H1 (cell line): ENCODE measurements at regions of chr1 and their contacts with region 1.

Region 1: GRCh38 chr1:44049839-44050238 is 18.6 kb upstream of the SLC6A9 start:
- DNase-seq: no peak
- H3K4me3 ChIP-seq: no peak overlapping the region
- H3K27ac ChIP-seq: no peak overlapping the region
- H3K4me1 ChIP-seq: peaks cover 0 to 3% (median under 1%) of the 10 kb centered on the region in 4 experiments; a peak in 1 of 7 replicates
- H3K27me3 ChIP-seq: peaks cover 0 to 5% (median 0%) of the 10 kb centered on the region in 4 experiments; a peak in 3 of 7 replicates
- CTCF ChIP-seq: no peak
- EP300 ChIP-seq: no peak
- POLR2A ChIP-seq: no peak
- RAD21 ChIP-seq: no peak

Region 2: GRCh38 chr1:43602990-43603389 is 446.8 kb before region 1 on chr1:
- CTCF ChIA-PET with region 1: no interaction called
- POLR2A ChIA-PET with region 1: no interaction called
- DNase-seq: no peak
- H3K4me3 ChIP-seq: no peak overlapping the region
- H3K27ac ChIP-seq: no peak overlapping the region
- H3K4me1 ChIP-seq: no peaks in the 10 kb centered on the region; a peak in 1 of 7 replicates
- H3K27me3 ChIP-seq: no peaks in the 10 kb centered on the region
- CTCF ChIP-seq: no peak
- EP300 ChIP-seq: no peak
- POLR2A ChIP-seq: no peak
- RAD21 ChIP-seq: no peak; a peak in 1 of 4 replicates

Region 3: GRCh38 chr1:43814401-43814800 is 235.4 kb before region 1 on chr1:
- CTCF ChIA-PET with region 1: no interaction called
- POLR2A ChIA-PET with region 1: no interaction called
- DNase-seq: no peak
- H3K4me3 ChIP-seq: no peak overlapping the region
- H3K27ac ChIP-seq: no peak overlapping the region
- H3K4me1 ChIP-seq: peaks cover 0 to 3% (median 0%) of the 10 kb centered on the region in 4 experiments; a peak in 2 of 7 replicates
- H3K27me3 ChIP-seq: no peaks in the 10 kb centered on the region
- CTCF ChIP-seq: no peak
- EP300 ChIP-seq: no peak
- POLR2A ChIP-seq: no peak
- RAD21 ChIP-seq: no peak

Region 4: GRCh38 chr1:43881415-43881814 is 168.4 kb before region 1 on chr1:
- CTCF ChIA-PET with region 1: no interaction called
- POLR2A ChIA-PET with region 1: no interaction called
- DNase-seq: no peak
- H3K4me3 ChIP-seq: no peak overlapping the region
- H3K27ac ChIP-seq: no peak overlapping the region
- H3K4me1 ChIP-seq: peaks cover 7 to 17% (median 12%) of the 10 kb centered on the region in 4 experiments
- H3K27me3 ChIP-seq: no peaks in the 10 kb centered on the region; a peak in 1 of 7 replicates
- CTCF ChIP-seq: peak; percentile 2 to 40 (median 2); a peak in 2 of 4 replicates
- EP300 ChIP-seq: no peak
- POLR2A ChIP-seq: no peak
- RAD21 ChIP-seq: peak in 1 of 2 experiments; percentile 39; a peak in 2 of 4 replicates

Region 5: DNA sequence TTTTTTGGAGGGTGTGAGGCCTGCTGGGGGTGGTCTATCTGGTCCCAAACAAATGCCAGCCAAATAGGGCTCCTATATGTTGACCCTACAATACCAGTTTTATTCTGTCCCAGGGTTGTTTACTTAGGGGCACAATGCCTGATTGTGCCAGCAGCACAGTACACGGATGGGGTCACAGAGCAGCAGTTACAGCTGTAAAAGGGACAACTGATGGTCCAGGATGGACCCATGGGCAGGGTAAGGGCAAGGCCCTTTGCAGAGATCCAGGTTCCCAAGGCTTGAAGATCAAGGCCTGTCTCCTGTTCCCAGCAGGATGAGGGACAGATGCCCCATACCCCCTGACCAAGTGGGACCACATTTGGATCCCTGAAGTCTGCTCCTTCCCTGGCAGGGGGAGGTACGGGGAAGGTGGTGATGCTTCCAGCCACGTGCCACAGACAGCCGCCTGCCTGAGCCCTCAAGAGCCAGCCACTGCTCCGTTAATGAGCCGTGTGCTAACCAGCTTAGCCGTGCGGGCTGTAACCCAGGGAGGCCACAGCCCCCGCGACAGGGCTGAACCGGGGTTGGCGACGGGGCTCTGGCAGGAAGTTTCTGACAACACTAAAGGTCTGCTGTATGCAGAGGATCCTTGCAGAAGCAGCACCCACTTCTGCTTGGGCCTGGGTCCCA is 36.8 kb before region 1 on chr1:
- CTCF ChIA-PET with region 1: interaction called, 72 read pairs
- POLR2A ChIA-PET with region 1: no interaction called
- DNase-seq: no peak
- H3K4me3 ChIP-seq: no peak overlapping the region
- H3K27ac ChIP-seq: no peak overlapping the region
- H3K4me1 ChIP-seq: peaks cover 0 to 8% (median 2%) of the 10 kb centered on the region in 4 experiments; a peak in 3 of 7 replicates
- H3K27me3 ChIP-seq: no peaks in the 10 kb centered on the region
- CTCF ChIP-seq: no peak
- EP300 ChIP-seq: no peak
- POLR2A ChIP-seq: no peak
- RAD21 ChIP-seq: no peak

Region 6: GRCh38 chr1:44019466-44019948 is 30.3 kb before region 1 on chr1:
- CTCF ChIA-PET with region 1: interaction called, 72 read pairs
- POLR2A ChIA-PET with region 1: no interaction called
- DNase-seq: no peak
- H3K4me3 ChIP-seq: no peak overlapping the region
- H3K27ac ChIP-seq: no peak overlapping the region
- H3K4me1 ChIP-seq: peaks cover 0 to 8% (median 2%) of the 10 kb centered on the region in 4 experiments; a peak in 4 of 7 replicates
- H3K27me3 ChIP-seq: no peaks in the 10 kb centered on the region
- CTCF ChIP-seq: no peak
- EP300 ChIP-seq: no peak
- POLR2A ChIP-seq: no peak
- RAD21 ChIP-seq: no peak

Region 7: DNA sequence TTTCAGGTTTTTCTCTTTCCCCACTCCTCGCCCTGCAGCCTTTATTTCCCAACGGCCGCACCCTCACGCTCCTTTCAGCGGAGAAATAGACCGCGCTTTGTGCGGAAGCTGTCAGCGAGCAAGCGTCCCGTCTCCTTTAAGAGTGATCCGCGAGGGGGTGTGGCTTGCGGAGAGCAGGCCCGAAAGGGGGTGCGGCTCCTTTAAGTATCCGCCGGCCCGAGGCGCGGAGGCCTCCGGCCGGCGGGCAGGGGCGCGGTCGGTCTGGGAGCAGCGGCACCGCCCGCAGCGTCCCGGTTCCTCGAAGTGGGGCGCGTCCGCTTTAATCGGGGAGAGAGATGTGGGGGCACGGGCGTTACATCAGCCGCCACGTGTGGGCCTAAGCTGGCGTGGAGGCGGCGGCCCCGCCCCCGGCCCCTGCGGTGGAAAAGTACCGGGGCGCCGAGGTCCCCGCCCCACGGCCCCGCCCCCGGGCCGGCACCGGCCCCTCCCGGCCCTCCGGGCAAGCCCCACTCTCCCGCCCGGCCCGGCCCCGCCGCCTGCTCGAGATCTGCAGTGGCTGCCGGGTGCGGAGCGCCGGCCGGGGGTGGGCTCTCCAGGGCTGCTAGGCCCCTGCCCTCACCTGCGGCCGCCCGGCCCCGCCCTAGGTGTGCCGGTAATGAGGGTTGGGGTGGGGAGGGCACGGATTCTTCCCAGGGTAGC is 19.8 kb before region 1 on chr1:
- CTCF ChIA-PET with region 1: interaction called, 205 read pairs
- POLR2A ChIA-PET with region 1: interaction called, 12 read pairs
- DNase-seq: peak in 1 of 2 experiments; percentile 92
- H3K4me3 ChIP-seq: peak overlapping the region; percentile 78 to 96 (median 86)
- H3K27ac ChIP-seq: peak overlapping the region; percentile 73; the same call in 1 of the 2 replicates
- H3K4me1 ChIP-seq: peaks cover 12 to 28% (median 18%) of the 10 kb centered on the region in 4 experiments
- H3K27me3 ChIP-seq: no peaks in the 10 kb centered on the region
- CTCF ChIP-seq: no peak
- EP300 ChIP-seq: peak in 1 of 2 experiments; percentile 3; a peak in 1 of 3 replicates
- POLR2A ChIP-seq: no peak; a peak in 1 of 3 replicates
- RAD21 ChIP-seq: no peak

Region 8: GRCh38 chr1:44059956-44060355 is 10.1 kb after region 1 on chr1:
- CTCF ChIA-PET with region 1: interaction called, 44 read pairs
- POLR2A ChIA-PET with region 1: interaction called, 5 read pairs
- DNase-seq: no peak
- H3K4me3 ChIP-seq: no peak overlapping the region
- H3K27ac ChIP-seq: no peak overlapping the region
- H3K4me1 ChIP-seq: no peaks in the 10 kb centered on the region
- H3K27me3 ChIP-seq: no peaks in the 10 kb centered on the region; a peak in 2 of 7 replicates
- CTCF ChIP-seq: no peak
- EP300 ChIP-seq: no peak
- POLR2A ChIP-seq: no peak
- RAD21 ChIP-seq: no peak